ENCODE measurements at regions of chr6 and their contacts with region 1.

Region 1: DNA sequence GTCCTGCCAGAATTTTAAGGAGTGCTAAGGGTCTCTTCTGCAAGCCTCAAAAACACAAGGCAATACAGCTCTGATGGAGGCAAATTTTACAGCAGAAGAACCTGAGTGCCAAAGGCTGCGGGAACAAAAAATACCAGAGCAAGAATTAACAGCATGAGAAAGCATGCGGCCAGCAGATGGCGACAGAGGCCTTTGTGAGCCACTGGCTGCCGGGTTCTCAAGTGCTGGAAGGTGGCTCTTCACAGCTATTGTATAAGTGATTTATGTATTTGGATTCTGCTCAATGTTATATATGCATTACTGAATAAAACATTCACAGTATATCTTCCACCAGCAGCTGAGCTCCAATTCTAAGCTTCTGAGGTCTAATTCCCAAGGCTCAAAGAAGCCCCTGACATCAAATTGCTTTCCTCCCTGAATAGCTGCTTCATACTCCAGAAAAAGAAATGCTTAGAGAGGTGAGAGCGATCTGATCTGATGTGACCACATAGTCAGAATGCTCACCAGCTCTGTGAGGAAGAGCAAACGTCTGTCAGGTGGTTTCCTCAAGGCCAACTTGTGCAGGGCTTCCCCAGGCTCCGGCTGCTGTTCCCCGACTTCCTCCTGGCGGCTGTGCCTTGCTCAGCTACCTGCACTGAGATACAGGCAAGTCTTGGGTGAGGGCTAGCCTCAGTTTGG is 58.6 kb downstream of the PPP1R3G start:
- DNase-seq: peak; percentile 55
- H3K4me3 ChIP-seq: no peak overlapping the region
- H3K27ac ChIP-seq: no peak overlapping the region
- H3K4me1 ChIP-seq: no peaks in the 10 kb centered on the region
- H3K27me3 ChIP-seq: no peaks in the 10 kb centered on the region
- CTCF ChIP-seq: peak; percentile 91

Region 2: DNA sequence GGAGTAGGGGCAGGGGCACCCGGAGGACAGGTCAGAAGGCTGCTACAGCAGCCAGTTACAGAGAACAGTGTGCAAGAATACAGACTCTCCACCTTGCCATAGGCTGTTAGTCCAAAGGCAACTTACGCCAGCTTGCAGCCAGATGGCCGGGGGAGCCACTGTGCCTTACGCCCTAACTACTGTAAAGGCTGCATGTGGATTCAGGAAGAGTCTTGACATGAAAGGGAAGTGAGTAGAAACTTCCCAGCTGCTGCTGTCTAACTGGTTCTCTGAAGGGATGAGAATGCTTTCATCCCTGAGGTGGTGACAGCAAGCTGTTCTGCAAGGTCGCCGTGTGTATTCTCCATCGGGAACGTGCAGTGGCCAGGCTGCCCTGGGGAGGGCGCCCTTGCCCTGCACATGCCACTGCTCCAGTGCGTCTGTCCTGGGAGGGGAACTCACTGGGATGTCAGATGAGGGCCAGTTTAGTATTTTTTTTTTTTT is 70.8 kb after region 1 on chr6:
- CTCF ChIA-PET with region 1: interaction called, 4 read pairs
- dilution Hi-C with region 1: no loop called
- in situ Hi-C with region 1: no loop called
- intact Hi-C with region 1: loop called (anchors 1 kb)
- DNase-seq: peak; percentile 21
- H3K4me3 ChIP-seq: no peak overlapping the region
- H3K27ac ChIP-seq: no peak overlapping the region
- H3K4me1 ChIP-seq: peaks cover 6% of the 10 kb centered on the region
- H3K27me3 ChIP-seq: no peaks in the 10 kb centered on the region
- CTCF ChIP-seq: peak; percentile 59 to 72

Region 3: GRCh38 chr6:5278047-5278446 is 134.3 kb after region 1 on chr6:
- CTCF ChIA-PET with region 1: no interaction called
- dilution Hi-C with region 1: no loop called
- in situ Hi-C with region 1: no loop called
- intact Hi-C with region 1: loop called (anchors 1 kb)
- DNase-seq: no peak
- H3K4me3 ChIP-seq: no peak overlapping the region
- H3K27ac ChIP-seq: no peak overlapping the region
- H3K4me1 ChIP-seq: peaks cover 16% of the 10 kb centered on the region
- H3K27me3 ChIP-seq: no peaks in the 10 kb centered on the region
- CTCF ChIP-seq: no peak

Region 4: DNA sequence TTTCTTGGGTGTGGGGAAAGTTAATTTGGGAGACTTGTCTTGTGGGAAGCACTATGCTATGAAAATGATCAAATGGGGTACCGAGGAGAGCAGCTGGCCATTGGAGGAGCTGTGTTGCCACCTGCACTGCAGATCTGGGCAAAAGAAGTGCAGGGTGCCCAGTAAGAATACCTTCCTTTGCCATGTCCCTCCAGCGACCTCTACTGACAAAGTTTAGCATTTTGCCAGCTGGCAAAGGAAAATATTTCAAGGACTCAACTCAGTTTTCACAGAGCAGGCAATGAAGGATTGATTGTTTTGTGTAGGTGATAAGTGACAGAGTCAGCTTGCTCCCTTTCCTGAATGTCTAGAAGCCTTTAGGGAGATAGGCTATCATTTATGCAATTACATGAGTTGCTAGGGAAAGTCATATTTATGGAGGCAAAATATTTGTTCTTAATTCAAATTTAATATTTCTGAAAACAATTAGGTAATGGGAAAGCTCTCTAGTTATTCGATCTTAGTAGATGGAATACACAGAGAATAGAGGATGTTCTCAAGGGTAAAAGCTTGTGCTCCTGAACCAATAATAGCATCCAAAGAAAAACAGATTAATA is 236.0 kb after region 1 on chr6:
- CTCF ChIA-PET with region 1: interaction called, 8 read pairs
- dilution Hi-C with region 1: no loop called
- in situ Hi-C with region 1: no loop called
- intact Hi-C with region 1: loop called (anchors 1 kb)
- DNase-seq: no peak
- H3K4me3 ChIP-seq: no peak overlapping the region
- H3K27ac ChIP-seq: no peak overlapping the region
- H3K4me1 ChIP-seq: no peaks in the 10 kb centered on the region
- H3K27me3 ChIP-seq: no peaks in the 10 kb centered on the region
- CTCF ChIP-seq: peak; percentile 62 to 77

Region 5: GRCh38 chr6:6057424-6058053 is 913.8 kb after region 1 on chr6:
- CTCF ChIA-PET with region 1: no interaction called
- dilution Hi-C with region 1: no loop called
- in situ Hi-C with region 1: no loop called
- intact Hi-C with region 1: loop called (anchors 5 kb)
- DNase-seq: peak; percentile 36
- H3K4me3 ChIP-seq: no peak overlapping the region
- H3K27ac ChIP-seq: no peak overlapping the region
- H3K4me1 ChIP-seq: no peaks in the 10 kb centered on the region
- H3K27me3 ChIP-seq: no peaks in the 10 kb centered on the region
- CTCF ChIP-seq: peak; percentile 62 to 65

Measured in mammary epithelial cell (primary cell).